AG04449 (cell line): ENCODE measurements at regions of chr2 and their contacts with region 1.

Region 1: GRCh38 chr2:237085248-237086221 is at the start of gene COPS8:
- DNase-seq: no peak
- H3K4me3 ChIP-seq: peak within 1 kb of the TSS; percentile 83
- CTCF ChIP-seq: peak; percentile 25

Region 2: DNA sequence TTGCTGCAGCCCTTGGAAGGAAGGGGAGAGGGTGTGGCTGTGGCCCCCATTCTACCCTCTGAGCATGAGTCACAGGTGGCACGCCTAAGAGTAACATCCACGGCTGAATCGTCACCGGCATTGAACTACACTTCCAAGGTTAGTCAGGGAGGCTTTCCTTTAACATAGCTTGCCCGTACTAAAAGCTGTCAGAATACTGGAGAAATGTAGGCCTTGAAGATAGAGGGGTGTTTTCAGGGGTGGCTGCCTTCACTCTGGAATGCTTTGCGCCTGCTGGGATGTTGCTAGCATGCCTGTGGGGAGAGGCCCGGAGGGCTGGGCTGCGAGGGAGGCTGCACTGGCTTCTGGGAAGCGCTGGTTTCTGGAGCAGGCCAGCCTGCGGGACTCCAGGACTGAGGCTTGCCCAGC is 1257.9 kb before region 1 on chr2:
- CTCF ChIA-PET with region 1: no interaction called
- POLR2A ChIA-PET with region 1: no interaction called
- DNase-seq: no peak
- H3K4me3 ChIP-seq: no peak overlapping the region
- CTCF ChIP-seq: no peak

Region 3: DNA sequence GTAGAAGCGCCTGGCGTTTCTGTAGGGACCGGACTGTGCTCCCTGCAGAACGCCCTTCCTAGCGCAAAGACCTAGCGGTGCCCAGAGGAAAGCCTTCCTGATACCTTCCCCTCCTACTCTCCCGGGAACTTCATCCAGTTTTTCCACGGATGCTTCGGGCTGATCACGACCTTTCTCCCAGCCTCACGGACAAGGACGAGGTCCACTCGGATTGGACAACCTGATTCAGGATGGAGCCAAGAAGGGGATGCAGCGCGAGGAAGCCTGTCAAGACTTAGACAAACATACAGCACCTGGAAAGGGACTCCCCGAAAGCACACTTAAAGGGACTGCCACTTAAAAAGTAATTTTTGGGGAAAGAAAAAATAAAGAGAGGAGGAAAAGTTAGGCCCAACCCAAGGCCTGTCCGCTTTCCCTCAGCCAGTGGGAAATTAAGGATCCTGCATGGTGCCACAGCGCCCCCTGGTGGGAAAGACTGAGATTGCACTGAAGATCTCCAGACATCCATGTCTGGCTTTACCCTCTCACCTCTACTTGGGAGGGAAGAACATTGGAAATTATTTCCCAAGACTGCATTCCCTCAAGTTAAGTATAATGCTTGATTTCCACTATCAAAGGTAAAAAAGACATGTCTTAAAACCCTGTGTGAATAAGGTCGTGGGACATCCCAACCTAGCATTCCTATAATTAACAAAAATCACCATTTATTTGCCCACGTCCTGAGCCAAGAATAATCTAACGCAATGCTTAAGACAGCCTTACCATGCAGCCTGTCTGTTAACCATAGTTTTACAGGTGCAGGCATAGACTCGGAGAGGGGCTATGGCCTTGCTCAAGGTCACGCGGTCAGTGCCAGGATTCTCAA is 13.2 kb before region 1 on chr2:
- CTCF ChIA-PET with region 1: interaction called, 23 read pairs
- POLR2A ChIA-PET with region 1: interaction called, 6 read pairs
- DNase-seq: no peak
- H3K4me3 ChIP-seq: no peak overlapping the region
- CTCF ChIP-seq: peak; percentile 86